BJ (cell line): ENCODE measurements at regions of chr1 and their contacts with region 1.

Region 1: GRCh38 chr1:151945725-151946364 is 36.5 kb upstream of the THEM4 start:
- DNase-seq: peak; percentile 96
- H3K4me3 ChIP-seq: no peak overlapping the region
- H3K27me3 ChIP-seq: no peaks in the 10 kb centered on the region
- CTCF ChIP-seq: no peak

Region 2: GRCh38 chr1:151909150-151910149 is 36.4 kb before region 1 on chr1 and contains the start of gene THEM4:
- CTCF ChIA-PET with region 1: no interaction called
- POLR2A ChIA-PET with region 1: interaction called, 10 read pairs
- DNase-seq: peak; percentile 74
- H3K4me3 ChIP-seq: peak within 1 kb of the TSS; percentile 77
- H3K27me3 ChIP-seq: no peaks in the 10 kb centered on the region
- CTCF ChIP-seq: no peak; the same call in 1 of the 2 replicates
- polyA plus RNA-seq, gene THEM4: 11.7 and 17.2 TPM in 2 replicates

Region 3: GRCh38 chr1:151934048-151934493 is 11.8 kb before region 1 on chr1:
- CTCF ChIA-PET with region 1: interaction called, 29 read pairs
- POLR2A ChIA-PET with region 1: no interaction called
- DNase-seq: no peak
- H3K4me3 ChIP-seq: no peak overlapping the region
- H3K27me3 ChIP-seq: peaks cover 5% of the 10 kb centered on the region; the same call in 1 of the 2 replicates
- CTCF ChIP-seq: peak; percentile 89